Right lobe of liver (tissue), 6 donors: ENCODE measurements at regions of chr19 and their contacts with region 1.

Region 1: GRCh38 chr19:48492925-48493717 is 18.5 kb downstream of the LMTK3 start:
- DNase-seq: peak; percentile 88 to 95 (median 94)
- ATAC-seq: peak; percentile 80 to 85 (median 82)
- H3K4me3 ChIP-seq: peak overlapping the region in 1 of 3 donors; percentile 41
- H3K27ac ChIP-seq: peak overlapping the region in 1 of 3 donors; percentile 47
- H3K4me1 ChIP-seq: no peaks in the 10 kb centered on the region
- H3K27me3 ChIP-seq: no peaks in the 10 kb centered on the region
- CTCF ChIP-seq: no peak
- POLR2A ChIP-seq: peak; percentile 41

Region 2: GRCh38 chr19:48569814-48570213 is 76.7 kb after region 1 on chr19:
- intact Hi-C with region 1: loop called in 1 of 2 experiments (anchors 10 kb)
- DNase-seq: no peak
- ATAC-seq: no peak
- H3K4me3 ChIP-seq: no peak overlapping the region
- H3K27ac ChIP-seq: no peak overlapping the region
- H3K4me1 ChIP-seq: no peaks in the 10 kb centered on the region
- H3K27me3 ChIP-seq: no peaks in the 10 kb centered on the region
- CTCF ChIP-seq: no peak
- POLR2A ChIP-seq: no peak

Region 3: DNA sequence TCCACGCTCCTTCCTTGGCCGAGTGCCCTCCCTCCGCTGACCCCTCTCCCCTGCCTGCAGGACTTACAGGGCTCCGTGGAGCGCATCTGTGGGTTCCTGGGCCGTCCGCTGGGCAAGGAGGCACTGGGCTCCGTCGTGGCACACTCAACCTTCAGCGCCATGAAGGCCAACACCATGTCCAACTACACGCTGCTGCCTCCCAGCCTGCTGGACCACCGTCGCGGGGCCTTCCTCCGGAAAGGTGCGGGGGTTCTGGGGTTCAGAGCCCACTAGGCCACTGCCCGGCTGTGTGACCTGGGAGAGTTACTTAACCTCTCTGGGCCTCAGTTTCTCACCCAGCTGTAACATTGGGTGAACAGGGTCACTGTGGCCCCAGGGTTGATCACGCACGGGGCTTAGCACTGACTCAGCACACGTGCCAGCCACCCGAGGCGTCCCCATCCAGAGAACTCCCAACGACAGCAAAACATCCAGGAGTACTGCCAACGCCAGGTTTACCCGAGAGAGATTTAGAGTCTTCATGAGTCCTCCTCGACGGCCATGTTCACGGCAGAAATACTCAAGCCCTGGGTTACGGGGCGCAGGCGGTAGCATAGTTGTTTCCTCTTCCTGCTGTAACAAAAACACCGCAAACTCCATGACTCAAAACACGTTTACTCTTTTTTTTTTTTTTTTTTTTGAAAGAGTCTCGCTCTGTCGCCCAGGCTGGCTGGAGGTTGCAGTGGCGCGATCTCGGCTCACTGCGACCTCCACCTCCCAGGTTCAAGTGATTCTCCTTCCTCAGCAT is 103.8 kb after region 1 on chr19:
- intact Hi-C with region 1: loop called in 1 of 2 experiments (anchors 10 kb)
- DNase-seq: no peak
- ATAC-seq: no peak
- H3K4me3 ChIP-seq: no peak overlapping the region
- H3K27ac ChIP-seq: no peak overlapping the region
- H3K4me1 ChIP-seq: no peaks in the 10 kb centered on the region
- H3K27me3 ChIP-seq: no peaks in the 10 kb centered on the region
- CTCF ChIP-seq: no peak
- POLR2A ChIP-seq: no peak

Region 4: DNA sequence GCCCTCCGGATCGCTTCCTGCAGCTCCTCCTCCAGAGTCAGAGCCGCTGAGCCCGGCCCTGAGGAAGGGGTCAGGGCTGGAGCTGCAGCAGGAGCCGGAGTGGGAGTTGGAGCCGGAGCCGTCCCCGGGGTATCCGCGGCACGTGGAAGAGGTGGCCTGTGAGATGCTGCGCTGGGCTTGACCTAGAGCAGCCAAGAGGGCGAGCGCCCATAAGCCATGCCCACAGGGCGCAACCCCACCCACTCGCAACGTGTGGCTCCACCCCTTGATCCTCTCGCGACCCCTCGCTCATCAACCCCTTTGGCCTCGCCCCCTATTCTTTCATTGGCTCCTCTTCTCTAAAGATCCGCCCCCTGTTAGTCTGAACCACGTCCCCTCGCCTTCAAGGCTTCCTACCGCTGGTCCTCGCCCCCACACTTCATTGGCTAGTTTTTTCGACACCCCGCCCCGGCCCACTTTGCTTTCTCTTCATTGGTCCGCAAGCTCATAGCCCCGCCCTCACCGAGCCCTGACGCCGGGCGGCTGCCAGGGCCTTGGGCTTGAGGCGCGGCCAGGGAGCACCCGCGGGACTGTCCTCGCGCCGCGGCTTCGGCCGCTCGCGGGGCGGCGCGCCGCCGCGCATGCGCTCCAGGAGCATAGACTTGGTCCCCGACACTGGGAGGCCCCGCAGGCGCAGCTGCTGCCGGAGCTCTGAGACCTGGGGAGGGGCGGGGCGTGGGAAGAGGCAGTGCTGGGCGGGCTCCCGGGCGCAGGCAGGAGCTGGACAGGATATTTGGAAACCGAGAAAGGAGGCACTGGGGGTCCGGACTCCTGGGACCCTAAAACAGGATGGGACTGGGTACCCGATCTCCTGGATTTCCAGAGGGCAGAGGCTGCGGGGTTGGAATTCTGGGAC is 221.0 kb after region 1 on chr19:
- intact Hi-C with region 1: no loop called
- DNase-seq: peak; percentile 99
- ATAC-seq: peak; percentile 90 to 95 (median 93)
- H3K4me3 ChIP-seq: peak overlapping the region; percentile 54 to 68 (median 62)
- H3K27ac ChIP-seq: peak overlapping the region; percentile 44 to 72 (median 59)
- H3K4me1 ChIP-seq: peaks cover 0 to 3% (median 0%) of the 10 kb centered on the region in 4 donors
- H3K27me3 ChIP-seq: no peaks in the 10 kb centered on the region
- CTCF ChIP-seq: peak in 1 of 4 donors; percentile 18
- POLR2A ChIP-seq: peak; percentile 60